A673 (cell line): ENCODE measurements at regions of chr4 and their contacts with region 1.

Region 1: GRCh38 chr4:127782274-127783025 is at the start of gene HSPA4L:
- DNase-seq: peak; percentile 56
- H3K4me3 ChIP-seq: peak within 1 kb of the TSS; percentile 63
- H3K27ac ChIP-seq: peak within 1 kb of the TSS; percentile 54
- H3K4me1 ChIP-seq: no peaks in the 10 kb centered on the region
- H3K27me3 ChIP-seq: peaks cover 29% of the 10 kb centered on the region
- CTCF ChIP-seq: peak; percentile 40; the same call in 1 of the 2 replicates
- total RNA-seq, gene HSPA4L: 3.8 and 4.9 TPM in 2 replicates

Region 2: GRCh38 chr4:127291316-127291715 is 491.1 kb before region 1 on chr4:
- CTCF ChIA-PET with region 1: no interaction called
- POLR2A ChIA-PET with region 1: no interaction called
- intact Hi-C with region 1: no loop called
- DNase-seq: no peak
- H3K4me3 ChIP-seq: no peak overlapping the region
- H3K27ac ChIP-seq: no peak overlapping the region
- H3K4me1 ChIP-seq: no peaks in the 10 kb centered on the region
- H3K27me3 ChIP-seq: no peaks in the 10 kb centered on the region
- CTCF ChIP-seq: no peak

Region 3: GRCh38 chr4:127668770-127669169 is 113.7 kb before region 1 on chr4:
- CTCF ChIA-PET with region 1: no interaction called
- POLR2A ChIA-PET with region 1: interaction called, 13 read pairs
- intact Hi-C with region 1: no loop called
- DNase-seq: no peak
- H3K4me3 ChIP-seq: no peak overlapping the region
- H3K27ac ChIP-seq: no peak overlapping the region
- H3K4me1 ChIP-seq: peaks cover 5% of the 10 kb centered on the region
- H3K27me3 ChIP-seq: no peaks in the 10 kb centered on the region
- CTCF ChIP-seq: no peak

Region 4: DNA sequence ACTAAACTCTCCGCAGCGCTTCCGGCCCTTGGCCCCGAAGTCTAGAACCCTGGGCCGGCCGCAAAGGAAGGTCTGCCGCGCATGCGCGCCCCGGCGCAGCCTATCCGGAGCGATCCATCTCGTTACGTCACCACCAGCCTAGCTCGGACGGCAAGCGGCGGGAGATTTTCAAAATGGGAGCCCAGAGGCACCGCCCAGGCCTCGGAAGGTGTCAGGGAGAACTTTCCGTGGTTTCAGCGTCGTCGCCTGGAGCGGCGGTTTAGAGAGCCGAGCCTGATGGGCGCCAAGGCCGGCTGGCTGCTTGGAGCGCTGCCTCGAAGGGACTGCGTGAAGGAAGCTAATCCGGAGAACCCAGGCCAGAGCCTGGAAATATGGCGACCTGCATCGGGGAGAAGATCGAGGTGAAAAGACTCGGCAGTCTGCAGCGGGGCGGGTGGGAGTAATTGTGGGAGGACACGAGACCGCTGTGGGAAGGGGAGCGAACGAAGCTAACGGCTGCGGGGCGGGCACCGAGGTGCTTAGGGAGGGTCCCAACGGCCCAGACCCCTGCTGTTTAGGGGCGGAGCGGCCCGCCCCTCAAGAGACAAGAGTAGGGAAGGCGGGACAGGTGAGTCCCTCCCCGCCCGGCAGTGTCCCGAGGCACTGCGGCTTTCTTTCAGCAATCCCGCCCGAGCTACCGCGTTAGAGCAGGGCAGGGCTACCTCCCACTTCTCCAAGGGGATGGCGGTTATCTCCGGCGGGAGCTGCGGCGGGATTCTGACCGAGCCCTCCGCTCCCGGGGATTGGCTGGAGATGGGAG is 98.5 kb after region 1 on chr4 and contains the start of gene PLK4:
- CTCF ChIA-PET with region 1: no interaction called
- POLR2A ChIA-PET with region 1: no interaction called
- intact Hi-C with region 1: loop called (anchors 5 kb)
- DNase-seq: peak; percentile 98
- H3K4me3 ChIP-seq: peak within 1 kb of the TSS; percentile 74
- H3K27ac ChIP-seq: peak within 1 kb of the TSS; percentile 97
- H3K4me1 ChIP-seq: peaks cover 23% of the 10 kb centered on the region
- H3K27me3 ChIP-seq: no peaks in the 10 kb centered on the region
- CTCF ChIP-seq: no peak
- total RNA-seq, gene PLK4: 46.9 and 52.4 TPM in 2 replicates

Region 5: DNA sequence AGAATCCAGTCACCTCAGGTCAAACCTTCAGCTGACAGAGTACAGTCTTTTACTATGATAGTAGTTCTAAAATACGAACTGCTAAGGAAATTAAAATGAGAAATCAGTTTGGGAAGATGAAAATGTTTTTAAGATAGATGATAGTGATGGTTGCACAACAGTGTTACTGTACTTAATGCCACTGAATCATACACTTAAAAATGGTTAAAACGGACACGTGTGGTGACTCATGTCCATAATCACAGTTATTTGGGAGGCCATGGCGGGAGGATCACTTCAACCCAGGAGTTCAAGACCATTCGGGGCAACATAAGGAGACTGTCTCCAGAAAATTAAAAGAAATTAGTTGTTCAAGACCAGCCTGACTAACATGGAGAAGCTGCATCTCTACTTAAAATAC is 224.1 kb after region 1 on chr4:
- CTCF ChIA-PET with region 1: no interaction called
- POLR2A ChIA-PET with region 1: no interaction called
- intact Hi-C with region 1: no loop called
- DNase-seq: no peak
- H3K4me3 ChIP-seq: no peak overlapping the region
- H3K27ac ChIP-seq: no peak overlapping the region
- H3K4me1 ChIP-seq: no peaks in the 10 kb centered on the region
- H3K27me3 ChIP-seq: no peaks in the 10 kb centered on the region
- CTCF ChIP-seq: no peak

Region 6: DNA sequence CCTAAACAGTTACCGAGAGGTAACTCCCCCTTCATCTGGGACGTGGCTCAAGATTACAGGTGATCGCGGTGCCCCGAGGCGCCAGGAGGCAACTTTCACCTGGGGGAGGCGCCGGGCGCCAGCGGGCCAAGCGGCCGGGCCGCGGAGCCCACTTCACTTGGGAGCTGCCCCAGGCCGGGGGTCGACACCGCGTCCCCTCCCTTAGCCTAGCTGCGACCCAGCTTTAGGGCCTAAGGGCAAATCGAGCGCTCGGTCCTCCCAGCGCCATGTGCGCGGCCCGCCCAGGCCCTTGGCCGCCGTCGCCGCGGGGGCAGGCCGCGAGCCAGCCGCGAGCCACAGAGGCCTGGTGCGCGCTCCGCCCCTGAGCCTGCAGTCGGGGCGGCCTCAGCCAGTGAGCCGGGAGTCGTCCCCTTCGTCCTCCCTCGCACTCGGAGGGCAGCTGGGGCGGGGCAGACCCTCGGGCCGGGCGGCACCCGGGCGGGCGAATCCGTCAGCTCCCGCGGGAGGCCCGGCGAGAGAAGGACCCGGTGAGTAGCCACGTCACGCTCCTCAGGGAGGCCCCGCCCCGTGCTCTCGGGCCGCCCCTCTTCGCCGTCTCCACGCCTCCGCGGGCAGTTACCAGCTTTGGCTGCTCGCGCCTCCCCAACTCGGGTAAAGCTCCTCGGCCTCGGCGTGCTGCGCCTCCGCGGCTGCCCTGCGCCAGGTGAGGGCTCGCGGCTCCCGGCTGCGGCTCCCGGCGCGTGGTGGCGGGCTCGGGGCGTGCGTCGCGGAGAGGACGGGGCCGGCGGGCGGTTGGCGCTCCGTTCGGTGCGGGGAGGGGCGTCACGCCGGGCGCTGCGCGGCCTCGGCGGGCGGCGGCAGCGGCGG is 278.5 kb after region 1 on chr4 and contains the start of gene LARP1B:
- CTCF ChIA-PET with region 1: no interaction called
- POLR2A ChIA-PET with region 1: no interaction called
- intact Hi-C with region 1: loop called (anchors 10 kb)
- DNase-seq: peak; percentile 97
- H3K4me3 ChIP-seq: peak within 1 kb of the TSS; percentile 93
- H3K27ac ChIP-seq: peak within 1 kb of the TSS; percentile 96
- H3K4me1 ChIP-seq: peaks cover 13% of the 10 kb centered on the region
- H3K27me3 ChIP-seq: no peaks in the 10 kb centered on the region
- CTCF ChIP-seq: no peak
- total RNA-seq, gene LARP1B: 20.3 and 21.5 TPM in 2 replicates

Region 7: GRCh38 chr4:128244379-128244778 is 461.9 kb after region 1 on chr4:
- CTCF ChIA-PET with region 1: no interaction called
- POLR2A ChIA-PET with region 1: no interaction called
- intact Hi-C with region 1: no loop called
- DNase-seq: no peak
- H3K4me3 ChIP-seq: no peak overlapping the region
- H3K27ac ChIP-seq: no peak overlapping the region
- H3K4me1 ChIP-seq: no peaks in the 10 kb centered on the region
- H3K27me3 ChIP-seq: no peaks in the 10 kb centered on the region
- CTCF ChIP-seq: no peak